ENCODE measurements at regions of chr6 and their contacts with region 1.

Region 1: DNA sequence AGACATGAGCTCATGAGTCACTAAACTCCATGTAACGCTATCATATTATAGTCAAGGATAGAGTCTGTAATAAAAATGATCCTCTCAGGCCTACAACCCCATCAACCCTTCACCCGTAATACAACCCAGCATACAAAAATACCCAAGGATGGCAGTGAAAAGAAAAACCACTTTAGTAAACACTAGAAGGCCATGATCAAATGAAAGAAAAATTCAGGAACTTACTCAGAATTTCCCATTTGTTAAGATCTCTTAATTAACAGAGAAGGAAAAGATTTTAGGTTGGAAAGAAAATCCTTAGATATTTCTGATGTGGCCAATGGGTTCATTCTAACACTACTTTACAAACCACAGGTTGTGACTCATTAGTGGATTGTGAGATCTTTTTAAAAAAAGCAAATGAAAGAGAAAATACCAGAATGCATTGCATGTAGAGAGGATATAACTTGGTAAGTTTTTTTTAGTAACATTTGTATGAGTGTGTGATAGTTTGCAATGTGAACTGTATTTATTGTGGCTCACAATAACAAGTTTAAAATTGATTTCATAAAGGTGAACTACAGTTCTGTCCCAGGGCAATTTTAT is 8.0 kb upstream of the UBE2J1 start:
- DNase-seq: no peak
- ATAC-seq: peak; percentile 34
- H3K4me3 Mint-ChIP-seq: no peak overlapping the region
- H3K27ac Mint-ChIP-seq: peak overlapping the region; percentile 72
- H3K4me1 Mint-ChIP-seq: peaks cover 79% of the 10 kb centered on the region
- H3K27me3 Mint-ChIP-seq: no peaks in the 10 kb centered on the region
- CTCF ChIP-seq: no peak

Region 2: GRCh38 chr6:89250239-89250638 is 110.3 kb before region 1 on chr6:
- CTCF ChIA-PET with region 1: no interaction called
- POLR2A ChIA-PET with region 1: interaction called, 14 read pairs
- intact Hi-C with region 1: no loop called
- DNase-seq: no peak
- ATAC-seq: no peak
- H3K4me3 Mint-ChIP-seq: no peak overlapping the region
- H3K27ac Mint-ChIP-seq: no peak overlapping the region
- H3K4me1 Mint-ChIP-seq: no peaks in the 10 kb centered on the region
- H3K27me3 Mint-ChIP-seq: peaks cover 7% of the 10 kb centered on the region
- CTCF ChIP-seq: no peak

Region 3: DNA sequence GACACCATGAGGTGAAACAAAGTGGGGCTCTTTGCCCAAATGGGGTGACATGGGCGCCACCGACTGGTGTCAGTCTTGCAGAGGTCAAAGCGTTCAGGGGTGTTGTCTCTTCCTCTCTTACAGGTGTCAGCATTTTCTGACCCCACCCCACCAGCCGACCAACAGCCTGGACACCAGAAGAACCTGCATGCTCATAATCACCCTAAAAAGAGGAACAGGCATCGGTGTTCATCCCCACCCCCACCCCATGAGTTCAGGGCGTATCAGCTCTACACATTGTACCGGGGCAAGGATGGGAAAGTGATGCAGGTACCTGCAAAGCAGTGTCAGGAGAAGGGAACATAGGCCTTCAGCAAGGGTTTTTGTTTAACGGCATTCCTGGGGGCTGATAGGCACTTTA is 263.2 kb after region 1 on chr6:
- CTCF ChIA-PET with region 1: no interaction called
- POLR2A ChIA-PET with region 1: interaction called, 10 read pairs
- intact Hi-C with region 1: no loop called
- DNase-seq: no peak
- ATAC-seq: no peak
- H3K4me3 Mint-ChIP-seq: no peak overlapping the region
- H3K27ac Mint-ChIP-seq: no peak overlapping the region
- H3K4me1 Mint-ChIP-seq: peaks cover 2% of the 10 kb centered on the region
- H3K27me3 Mint-ChIP-seq: no peaks in the 10 kb centered on the region
- CTCF ChIP-seq: no peak

Region 4: DNA sequence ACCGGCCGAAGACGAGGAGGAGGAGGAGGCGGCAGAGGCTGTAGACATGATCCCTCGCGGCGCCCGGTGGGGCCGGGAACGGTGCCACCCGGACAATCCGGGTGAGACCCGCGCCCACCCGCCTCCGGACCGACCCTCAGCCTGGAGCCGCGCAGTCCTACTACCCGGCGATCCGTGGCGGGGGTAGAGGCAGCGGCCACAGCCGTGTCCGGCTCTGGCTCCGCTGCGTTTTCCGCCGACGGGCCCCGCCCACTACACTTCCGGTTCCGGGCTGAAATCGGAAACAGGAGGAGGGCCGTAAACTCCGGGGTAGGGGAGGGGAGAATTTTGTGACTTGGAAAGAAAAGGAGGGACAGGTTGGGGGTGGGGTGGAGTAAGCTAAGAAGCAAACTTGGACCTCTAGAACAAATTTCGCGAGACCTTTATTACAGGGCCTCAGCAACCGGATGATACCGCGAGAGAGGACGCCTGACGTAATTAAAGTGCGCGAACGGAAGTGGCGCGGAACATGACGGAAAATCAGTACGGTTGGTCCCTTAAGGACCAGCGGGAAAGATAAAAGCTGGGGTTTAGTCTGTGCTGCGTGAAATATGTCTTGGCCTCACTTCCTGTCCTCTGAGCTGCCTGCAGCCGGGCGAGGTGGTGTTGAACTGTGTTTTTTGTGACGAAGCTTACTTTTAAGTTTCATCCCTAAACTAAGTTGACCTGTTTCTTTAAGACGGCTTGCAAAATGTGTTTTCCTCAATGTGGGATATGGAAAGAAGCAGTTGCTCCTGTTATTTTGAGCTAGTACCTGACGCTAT is 1226.5 kb after region 1 on chr6 and contains the start of gene MAP3K7:
- CTCF ChIA-PET with region 1: no interaction called
- POLR2A ChIA-PET with region 1: no interaction called
- intact Hi-C with region 1: loop called (anchors 5 kb)
- DNase-seq: peak; percentile 91
- ATAC-seq: peak; percentile 86
- H3K4me3 Mint-ChIP-seq: peak within 1 kb of the TSS; percentile 94
- H3K27ac Mint-ChIP-seq: peak within 1 kb of the TSS; percentile 99
- H3K4me1 Mint-ChIP-seq: peaks cover 41% of the 10 kb centered on the region
- H3K27me3 Mint-ChIP-seq: peaks cover 7% of the 10 kb centered on the region
- CTCF ChIP-seq: no peak
- total RNA-seq, gene MAP3K7: 23.8 and 27.2 TPM in 2 replicates

Measured in activated B cell treated with CpG ODN at 0.5 μM for 24 hours (primary cell).